ENCODE measurements at regions of chr11 and their contacts with region 1.

Region 1: DNA sequence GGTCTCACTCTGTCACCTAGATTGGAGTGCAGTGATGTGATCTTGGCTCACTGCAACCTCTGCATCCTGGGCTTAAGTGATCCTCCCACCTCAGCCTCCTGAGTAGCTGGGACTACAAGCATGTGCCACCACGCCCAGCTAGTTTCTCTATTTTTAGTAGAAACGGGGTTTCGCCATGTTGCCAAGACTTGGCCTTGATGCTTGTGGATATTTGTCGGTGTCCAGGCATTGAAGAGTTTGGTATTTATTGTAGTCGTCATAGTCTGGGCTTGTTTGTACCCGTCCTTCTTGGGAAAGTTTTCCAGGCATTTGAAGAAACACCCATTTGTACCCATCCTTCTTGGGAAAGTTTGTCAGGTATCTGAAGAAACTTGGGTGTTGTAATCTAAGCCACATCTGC is 28.7 kb downstream of the FCHSD2 start:
- DNase-seq: no peak
- ATAC-seq: no peak
- H3K4me3 ChIP-seq: no peak overlapping the region
- H3K4me3 Mint-ChIP-seq: no peak overlapping the region
- H3K27ac ChIP-seq: no peak overlapping the region
- H3K27ac Mint-ChIP-seq: no peak overlapping the region
- H3K4me1 ChIP-seq: no peaks in the 10 kb centered on the region
- H3K4me1 Mint-ChIP-seq: peaks cover 5 to 29% (median 21%) of the 10 kb centered on the region in 3 donors
- H3K27me3 ChIP-seq: no peaks in the 10 kb centered on the region
- H3K27me3 Mint-ChIP-seq: no peaks in the 10 kb centered on the region

Region 2: GRCh38 chr11:72751285-72752087 is 361.9 kb before region 1 on chr11:
- CTCF ChIA-PET with region 1: no interaction called
- POLR2A ChIA-PET with region 1: interaction called in 1 of 2 experiments, 13 read pairs
- DNase-seq: no peak
- ATAC-seq: peak in 3 of 4 experiments; percentile 1 to 9 (median 2)
- H3K4me3 ChIP-seq: peak overlapping the region; percentile 85 to 96
- H3K4me3 Mint-ChIP-seq: peak overlapping the region; percentile 81 to 97 (median 95)
- H3K27ac ChIP-seq: peak overlapping the region; percentile 61
- H3K27ac Mint-ChIP-seq: peak overlapping the region; percentile 90 to 93
- H3K4me1 ChIP-seq: peaks cover 11 to 50% of the 10 kb centered on the region in 2 experiments
- H3K4me1 Mint-ChIP-seq: peaks cover 45 to 56% (median 50%) of the 10 kb centered on the region in 3 donors
- H3K27me3 ChIP-seq: no peaks in the 10 kb centered on the region
- H3K27me3 Mint-ChIP-seq: no peaks in the 10 kb centered on the region

Region 3: GRCh38 chr11:73085189-73085875 is 28.1 kb before region 1 on chr11:
- CTCF ChIA-PET with region 1: no interaction called
- POLR2A ChIA-PET with region 1: interaction called, 3 to 19 read pairs
- DNase-seq: no peak
- ATAC-seq: no peak
- H3K4me3 ChIP-seq: no peak overlapping the region
- H3K4me3 Mint-ChIP-seq: no peak overlapping the region
- H3K27ac ChIP-seq: no peak overlapping the region
- H3K27ac Mint-ChIP-seq: no peak overlapping the region
- H3K4me1 ChIP-seq: no peaks in the 10 kb centered on the region
- H3K4me1 Mint-ChIP-seq: peaks cover 23 to 32% (median 28%) of the 10 kb centered on the region in 3 donors
- H3K27me3 ChIP-seq: no peaks in the 10 kb centered on the region
- H3K27me3 Mint-ChIP-seq: no peaks in the 10 kb centered on the region

Region 4: DNA sequence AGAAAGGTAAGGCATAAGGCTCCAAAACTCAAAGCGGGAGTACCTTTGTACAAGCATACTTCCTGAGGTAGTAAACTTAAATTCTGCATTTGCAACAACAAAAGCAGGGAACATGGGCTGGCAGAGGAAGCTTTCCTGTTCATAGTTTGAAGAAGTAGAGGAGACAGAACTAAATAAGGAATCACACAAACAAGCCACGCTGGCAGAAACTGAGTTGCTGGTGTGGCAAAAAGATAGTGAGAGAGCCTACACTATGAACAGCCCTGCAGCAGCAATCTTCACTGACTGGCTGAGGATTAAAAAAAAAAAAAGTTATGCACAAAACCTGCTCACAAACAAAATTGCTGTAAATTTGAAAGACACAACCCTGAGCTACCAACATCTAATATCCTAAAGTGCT is 17.8 kb before region 1 on chr11:
- CTCF ChIA-PET with region 1: no interaction called
- POLR2A ChIA-PET with region 1: interaction called in 1 of 2 experiments, 17 read pairs
- DNase-seq: no peak
- ATAC-seq: no peak
- H3K4me3 ChIP-seq: no peak overlapping the region
- H3K4me3 Mint-ChIP-seq: no peak overlapping the region
- H3K27ac ChIP-seq: no peak overlapping the region
- H3K27ac Mint-ChIP-seq: peak overlapping the region in 1 of 2 donors; percentile 47
- H3K4me1 ChIP-seq: no peaks in the 10 kb centered on the region
- H3K4me1 Mint-ChIP-seq: peaks cover 30 to 44% (median 39%) of the 10 kb centered on the region in 3 donors
- H3K27me3 ChIP-seq: no peaks in the 10 kb centered on the region
- H3K27me3 Mint-ChIP-seq: no peaks in the 10 kb centered on the region

Measured in T-cell (primary cell).